Mammary epithelial cell (primary cell): ENCODE measurements at regions of chr16 and their contacts with region 1.

Region 1: DNA sequence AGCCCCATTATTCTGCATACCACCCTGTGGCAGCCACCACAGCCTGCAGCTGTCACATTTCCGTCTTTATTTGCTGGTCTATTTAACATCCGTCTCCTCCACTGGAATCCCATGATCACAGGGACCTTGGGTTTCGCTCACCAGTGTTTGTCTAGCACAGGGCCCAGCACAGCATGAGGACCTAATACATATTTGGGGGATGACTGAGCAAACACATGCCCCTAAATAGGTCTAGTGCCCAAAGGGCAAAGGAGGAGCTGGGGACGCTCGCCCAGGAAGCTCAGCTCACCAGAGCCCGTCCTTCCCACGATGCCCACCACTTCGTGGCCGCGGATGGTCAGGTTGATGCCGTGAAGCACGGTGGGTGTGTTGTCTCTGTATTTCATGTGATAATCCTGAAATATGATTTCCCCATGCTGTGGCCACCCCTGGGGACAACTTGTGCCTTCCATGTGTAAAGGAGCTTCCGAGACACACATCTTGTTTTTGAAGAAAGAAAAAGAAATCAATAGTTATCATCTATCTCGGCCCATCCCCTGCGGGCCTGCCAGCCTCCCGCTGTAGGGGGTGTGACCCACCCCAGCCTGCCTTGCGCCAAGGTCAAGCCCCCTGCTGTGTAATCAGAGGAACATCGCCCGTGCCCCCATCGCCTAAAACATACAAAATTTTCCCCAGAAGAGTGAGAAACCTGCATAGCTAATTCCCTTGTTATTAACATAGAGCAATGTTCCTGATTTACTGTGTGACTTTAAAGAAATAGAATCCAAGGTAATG is 21.0 kb upstream of the ABCC12 start:
- DNase-seq: no peak
- H3K4me3 ChIP-seq: no peak overlapping the region
- H3K27ac ChIP-seq: no peak overlapping the region
- H3K4me1 ChIP-seq: peaks cover 1% of the 10 kb centered on the region
- H3K27me3 ChIP-seq: no peaks in the 10 kb centered on the region
- CTCF ChIP-seq: no peak

Region 2: DNA sequence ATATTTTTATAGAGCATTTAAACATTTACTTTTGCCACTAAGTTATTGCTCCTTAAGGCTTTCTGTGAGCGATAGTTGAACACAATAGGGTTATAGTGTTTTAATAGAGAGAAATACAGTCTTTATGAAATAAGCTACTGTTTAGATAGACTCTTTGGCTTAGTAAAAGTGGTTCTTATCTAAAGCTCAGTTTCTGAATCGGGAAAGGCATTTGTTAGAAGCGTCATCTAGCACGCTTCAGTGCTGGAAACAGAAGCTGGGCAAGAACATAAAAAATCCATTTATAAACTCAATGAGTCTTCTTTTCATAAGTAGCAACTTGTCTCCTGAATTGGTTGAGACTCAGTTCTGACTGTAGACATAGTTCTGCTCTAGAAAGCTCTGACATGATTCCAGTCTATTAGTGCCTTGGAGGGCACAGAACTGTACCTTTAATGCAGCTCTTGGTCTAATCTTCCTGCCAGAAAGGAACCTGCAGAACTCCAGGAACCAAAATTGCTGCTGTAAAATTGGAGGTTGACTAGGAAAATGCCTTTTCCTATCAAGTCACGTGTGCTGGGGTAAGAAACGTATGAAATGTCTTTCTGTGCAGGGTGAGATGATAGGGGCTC is 1148.0 kb before region 1 on chr16:
- CTCF ChIA-PET with region 1: no interaction called
- dilution Hi-C with region 1: loop called (anchors 10 kb)
- in situ Hi-C with region 1: no loop called
- intact Hi-C with region 1: no loop called
- DNase-seq: no peak
- H3K4me3 ChIP-seq: no peak overlapping the region
- H3K27ac ChIP-seq: no peak overlapping the region
- H3K4me1 ChIP-seq: no peaks in the 10 kb centered on the region
- H3K27me3 ChIP-seq: no peaks in the 10 kb centered on the region
- CTCF ChIP-seq: no peak

Region 3: GRCh38 chr16:47779201-47780016 is 397.4 kb before region 1 on chr16:
- CTCF ChIA-PET with region 1: no interaction called
- dilution Hi-C with region 1: no loop called
- in situ Hi-C with region 1: no loop called
- intact Hi-C with region 1: no loop called
- DNase-seq: no peak
- H3K4me3 ChIP-seq: no peak overlapping the region
- H3K27ac ChIP-seq: no peak overlapping the region
- H3K4me1 ChIP-seq: peaks cover 8% of the 10 kb centered on the region
- H3K27me3 ChIP-seq: no peaks in the 10 kb centered on the region
- CTCF ChIP-seq: no peak

Region 4: DNA sequence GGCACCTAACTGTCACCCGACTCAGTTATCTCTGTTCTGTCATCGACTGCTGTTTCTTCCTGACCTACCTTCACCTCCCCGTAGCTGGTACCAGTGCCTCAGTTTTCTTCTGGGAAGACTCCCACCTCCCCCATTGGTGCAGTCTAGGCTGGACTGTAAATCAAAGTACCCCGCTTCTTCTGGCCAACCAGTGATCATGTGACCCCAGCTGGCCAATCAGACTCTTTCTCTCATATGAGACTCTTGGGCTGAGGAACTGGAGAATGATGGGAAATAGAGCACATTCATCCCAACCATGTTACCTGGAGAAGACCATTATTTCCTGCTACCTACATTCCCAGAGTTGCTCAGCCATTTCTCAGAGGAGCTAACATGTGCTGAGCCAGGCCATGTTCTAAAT is 46.7 kb after region 1 on chr16:
- CTCF ChIA-PET with region 1: no interaction called
- dilution Hi-C with region 1: loop called (anchors 5 kb)
- in situ Hi-C with region 1: no loop called
- intact Hi-C with region 1: no loop called
- DNase-seq: no peak
- H3K4me3 ChIP-seq: no peak overlapping the region
- H3K27ac ChIP-seq: no peak overlapping the region
- H3K4me1 ChIP-seq: peaks cover 4% of the 10 kb centered on the region
- H3K27me3 ChIP-seq: no peaks in the 10 kb centered on the region
- CTCF ChIP-seq: no peak